Natural killer cell (primary cell): ENCODE measurements at regions of chr9 and their contacts with region 1.

Region 1: DNA sequence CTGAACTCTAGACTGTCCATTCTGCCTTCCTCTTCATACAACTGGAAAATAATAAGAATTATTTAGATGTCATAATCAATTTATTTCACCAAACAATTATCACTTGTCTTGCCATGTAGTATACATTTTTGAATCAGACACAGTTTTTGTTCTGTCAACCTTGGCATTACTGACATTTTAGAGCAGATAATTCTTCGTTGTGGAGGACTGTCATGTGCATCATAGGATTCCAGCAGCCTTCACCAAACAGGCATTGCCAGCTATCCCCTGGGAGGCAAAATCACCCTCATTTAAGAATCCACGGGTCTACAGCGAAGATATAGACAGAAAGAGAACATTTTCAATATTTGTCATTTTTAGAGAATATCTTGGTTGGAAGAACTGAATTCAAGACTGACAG is 293.9 kb downstream of the KDM4C start:
- DNase-seq: no peak
- ATAC-seq: no peak
- H3K4me3 ChIP-seq: no peak overlapping the region
- H3K4me3 Mint-ChIP-seq: no peak overlapping the region
- H3K27ac ChIP-seq: no peak overlapping the region
- H3K27ac Mint-ChIP-seq: no peak overlapping the region
- H3K4me1 ChIP-seq: no peaks in the 10 kb centered on the region
- H3K4me1 Mint-ChIP-seq: peaks cover 7 to 15% of the 10 kb centered on the region in 2 donors
- H3K27me3 ChIP-seq: no peaks in the 10 kb centered on the region
- H3K27me3 Mint-ChIP-seq: no peaks in the 10 kb centered on the region
- CTCF ChIP-seq: no peak

Region 2: DNA sequence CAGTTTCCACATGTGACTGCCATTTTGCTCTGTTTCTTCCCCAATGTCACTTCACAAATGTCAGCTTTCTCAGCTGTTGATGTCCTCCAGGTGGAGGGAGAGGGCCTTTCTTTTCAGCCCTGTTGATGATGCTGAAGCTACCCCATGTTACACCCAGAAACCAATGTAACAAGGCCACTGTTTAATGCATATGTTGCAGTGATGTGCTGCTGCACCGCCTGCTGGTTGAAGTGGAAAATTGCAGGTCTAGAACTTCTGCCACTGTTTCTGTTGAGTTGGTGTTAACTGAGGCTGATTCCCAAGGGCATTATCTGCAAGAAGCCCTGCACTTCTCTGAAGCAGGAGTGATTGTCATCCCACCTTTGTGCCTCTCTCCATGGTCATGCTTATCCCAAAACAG is 134.5 kb after region 1 on chr9:
- intact Hi-C with region 1: loop called (anchors 1 kb)
- DNase-seq: peak in 1 of 2 donors; percentile 4
- ATAC-seq: no peak
- H3K4me3 ChIP-seq: no peak overlapping the region
- H3K4me3 Mint-ChIP-seq: no peak overlapping the region
- H3K27ac ChIP-seq: no peak overlapping the region
- H3K27ac Mint-ChIP-seq: no peak overlapping the region
- H3K4me1 ChIP-seq: no peaks in the 10 kb centered on the region
- H3K4me1 Mint-ChIP-seq: no peaks in the 10 kb centered on the region
- H3K27me3 ChIP-seq: no peaks in the 10 kb centered on the region
- H3K27me3 Mint-ChIP-seq: no peaks in the 10 kb centered on the region
- CTCF ChIP-seq: peak; percentile 24